ENCODE measurements at regions of chr6 and their contacts with region 1.

Region 1: DNA sequence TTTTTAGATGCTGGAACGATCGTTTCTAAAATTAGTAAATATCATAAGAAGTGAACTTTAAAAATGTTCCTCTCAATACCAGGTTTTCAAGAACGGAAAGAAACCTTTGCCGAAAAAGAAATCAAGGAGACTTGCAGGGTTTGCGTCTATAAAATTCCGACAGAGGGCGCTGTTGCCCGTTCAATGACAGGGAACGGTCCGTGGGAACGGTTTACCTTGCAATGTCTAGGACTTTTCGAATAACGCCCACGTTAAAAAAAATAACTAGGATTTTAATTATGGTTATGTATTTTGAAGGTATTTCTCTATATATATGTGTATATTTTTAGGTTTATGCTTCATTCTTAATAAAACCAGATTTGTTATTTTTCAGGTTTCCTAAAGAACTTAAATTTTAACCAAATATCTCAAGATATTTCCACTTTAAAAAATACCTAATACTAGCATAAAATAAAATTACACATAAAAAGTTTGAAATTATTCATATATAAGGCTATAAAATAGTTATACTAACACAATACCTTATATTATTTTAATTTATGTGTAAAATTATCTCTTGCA is 2.5 kb upstream of the TFAP2B start:
- DNase-seq: peak; percentile 67
- CTCF ChIP-seq: peak; percentile 75

Region 2: DNA sequence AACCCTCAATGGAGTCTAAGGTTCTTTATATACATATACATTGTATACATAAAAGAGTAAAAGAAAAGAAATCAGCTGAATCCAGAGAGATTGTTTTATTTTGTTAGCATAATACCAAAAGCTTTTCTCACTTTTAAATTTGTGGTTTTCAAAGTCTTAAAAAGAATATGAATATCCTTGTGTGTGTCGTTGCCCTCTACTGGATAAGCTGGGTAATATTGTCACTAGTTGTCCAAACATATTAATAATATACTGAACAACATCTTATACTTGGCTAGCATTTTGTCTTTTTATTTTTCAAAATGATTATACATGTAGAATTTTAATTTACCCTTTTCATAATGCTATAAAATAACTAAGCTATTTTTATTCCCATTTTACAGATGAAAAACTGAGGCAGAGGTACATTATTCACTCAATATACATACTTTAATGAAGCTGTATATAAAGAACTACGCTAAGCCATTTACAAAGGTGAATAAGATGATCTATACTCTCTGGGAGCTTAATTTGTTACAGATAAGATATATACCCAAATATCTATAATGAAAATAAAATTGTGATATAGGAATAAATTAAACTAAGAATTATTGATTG is 534.2 kb after region 1 on chr6:
- in situ Hi-C with region 1: loop called (anchors 25 kb)
- DNase-seq: peak; percentile 2
- CTCF ChIP-seq: peak; percentile 18

Region 3: GRCh38 chr6:51531623-51532022 is 715.4 kb after region 1 on chr6:
- in situ Hi-C with region 1: loop called (anchors 10 kb)
- DNase-seq: no peak
- CTCF ChIP-seq: no peak

Region 4: GRCh38 chr6:52020945-52021570 is 1204.9 kb after region 1 on chr6:
- in situ Hi-C with region 1: loop called (anchors 25 kb)
- DNase-seq: peak; percentile 28
- CTCF ChIP-seq: peak; percentile 53

Measured in GM13976 (cell line).